Esophagus squamous epithelium (tissue), 5 donors: ENCODE measurements at regions of chr17 and their contacts with region 1.

Region 1: DNA sequence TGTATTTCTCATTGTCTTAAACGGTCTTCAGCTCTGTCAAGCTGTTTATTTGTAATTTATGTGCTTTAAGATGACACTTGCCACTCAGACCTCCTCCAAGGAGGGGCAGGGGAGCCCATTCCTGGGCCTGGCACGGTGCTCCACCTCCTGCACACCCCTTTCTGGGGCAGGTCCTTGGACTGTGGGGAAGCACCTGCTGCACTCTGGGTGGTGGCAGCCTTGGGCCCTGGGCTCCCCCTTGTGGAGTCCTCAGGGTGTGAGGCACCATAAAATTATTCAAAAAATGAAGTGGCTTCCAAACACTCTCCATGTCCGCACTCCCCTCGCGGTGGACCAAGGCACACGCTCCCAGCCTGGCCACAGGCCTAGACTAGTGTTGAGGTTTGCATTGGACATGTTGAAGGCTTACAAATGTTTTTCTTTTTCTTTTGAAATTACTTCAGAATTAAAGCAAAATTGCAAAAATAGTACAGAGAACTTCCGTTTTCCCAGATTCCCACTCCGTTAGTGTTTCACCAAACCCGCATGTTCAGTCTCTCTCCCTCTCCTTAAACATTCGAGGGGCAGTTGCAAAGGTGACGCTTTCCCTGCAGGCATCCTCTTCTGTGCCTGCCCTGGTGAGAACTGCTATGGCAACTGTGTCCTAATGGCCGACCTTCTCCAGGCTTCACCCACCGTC is 32.4 kb downstream of the FOXK2 start:
- DNase-seq: peak; percentile 10
- H3K4me3 ChIP-seq: no peak overlapping the region
- H3K27ac ChIP-seq: peak overlapping the region in 3 of 4 donors; percentile 42 to 46 (median 44)
- H3K4me1 ChIP-seq: peaks cover 19 to 68% (median 53%) of the 10 kb centered on the region in 3 donors
- H3K27me3 ChIP-seq: no peaks in the 10 kb centered on the region
- CTCF ChIP-seq: peak; percentile 66 to 87 (median 82)
- POLR2A ChIP-seq: no peak

Region 2: DNA sequence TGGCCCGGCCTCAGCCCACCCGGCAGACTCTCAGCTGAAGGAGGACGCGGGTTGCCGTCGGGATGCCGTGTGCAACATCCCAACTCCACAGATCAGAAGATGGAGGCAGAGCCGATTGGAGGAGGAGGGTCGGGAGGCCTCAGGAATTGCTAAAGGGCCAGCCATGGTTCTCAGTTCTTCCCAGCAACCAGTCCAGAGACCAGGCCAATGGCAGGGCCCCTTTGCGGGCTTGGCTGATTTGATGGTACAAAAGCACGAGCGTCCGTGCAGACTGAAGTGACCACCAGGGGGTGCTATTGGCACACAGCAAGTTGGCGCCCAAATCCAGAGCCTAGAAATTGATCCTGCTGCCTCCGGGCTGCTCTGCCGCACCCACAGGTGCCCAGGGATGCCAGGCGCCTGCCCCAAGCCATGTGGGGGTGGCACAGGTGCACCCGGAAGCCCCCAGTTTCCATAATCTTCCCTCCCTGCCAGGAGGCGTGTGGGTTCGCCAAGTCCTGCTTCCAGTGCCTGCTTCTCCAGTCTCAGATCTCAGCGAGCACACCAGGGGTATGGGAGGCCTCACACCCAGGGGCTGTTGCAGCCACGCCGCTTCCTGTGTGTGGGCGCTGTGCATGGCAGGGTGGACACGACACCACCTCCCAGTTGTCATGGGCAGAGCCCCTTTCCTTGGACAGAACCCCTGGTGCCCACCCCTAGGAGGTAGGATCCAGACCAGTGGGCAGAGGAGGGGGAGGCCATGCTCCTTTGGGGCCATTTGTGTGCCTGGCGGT is 200.0 kb before region 1 on chr17:
- intact Hi-C with region 1: loop called (anchors 10 kb)
- DNase-seq: no peak
- H3K4me3 ChIP-seq: no peak overlapping the region
- H3K27ac ChIP-seq: no peak overlapping the region
- H3K4me1 ChIP-seq: peaks cover 0 to 25% (median 3%) of the 10 kb centered on the region in 3 donors
- H3K27me3 ChIP-seq: peaks cover 0 to 77% (median 0%) of the 10 kb centered on the region in 4 donors
- CTCF ChIP-seq: peak; percentile 91 to 99 (median 96)
- POLR2A ChIP-seq: no peak

Region 3: DNA sequence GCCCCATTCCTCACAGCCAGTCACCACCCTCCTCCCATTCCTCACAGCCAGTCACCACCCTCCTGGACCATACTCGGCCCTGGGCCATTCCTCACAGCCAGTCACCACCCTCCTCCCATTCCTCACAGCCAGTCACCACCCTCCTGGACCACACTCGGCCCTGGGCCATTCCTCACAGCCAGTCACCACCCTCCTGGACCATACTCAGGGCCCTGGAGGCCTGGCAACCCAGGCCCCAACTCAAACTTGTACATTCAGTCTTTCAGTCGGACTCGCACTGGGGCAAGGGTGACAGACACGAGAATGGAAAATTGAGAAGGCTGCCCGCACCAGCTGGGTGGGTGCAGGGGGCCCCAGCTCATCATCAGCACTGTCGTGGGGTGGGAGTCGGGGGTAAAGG is 62.8 kb before region 1 on chr17:
- intact Hi-C with region 1: loop called (anchors 5 kb)
- DNase-seq: no peak
- H3K4me3 ChIP-seq: no peak overlapping the region
- H3K27ac ChIP-seq: peak overlapping the region in 3 of 4 donors; percentile 43 to 81 (median 74)
- H3K4me1 ChIP-seq: peaks cover 24 to 57% (median 27%) of the 10 kb centered on the region in 3 donors
- H3K27me3 ChIP-seq: no peaks in the 10 kb centered on the region
- CTCF ChIP-seq: no peak
- POLR2A ChIP-seq: no peak